ENCODE measurements at regions of chr18 and their contacts with region 1.

Region 1: DNA sequence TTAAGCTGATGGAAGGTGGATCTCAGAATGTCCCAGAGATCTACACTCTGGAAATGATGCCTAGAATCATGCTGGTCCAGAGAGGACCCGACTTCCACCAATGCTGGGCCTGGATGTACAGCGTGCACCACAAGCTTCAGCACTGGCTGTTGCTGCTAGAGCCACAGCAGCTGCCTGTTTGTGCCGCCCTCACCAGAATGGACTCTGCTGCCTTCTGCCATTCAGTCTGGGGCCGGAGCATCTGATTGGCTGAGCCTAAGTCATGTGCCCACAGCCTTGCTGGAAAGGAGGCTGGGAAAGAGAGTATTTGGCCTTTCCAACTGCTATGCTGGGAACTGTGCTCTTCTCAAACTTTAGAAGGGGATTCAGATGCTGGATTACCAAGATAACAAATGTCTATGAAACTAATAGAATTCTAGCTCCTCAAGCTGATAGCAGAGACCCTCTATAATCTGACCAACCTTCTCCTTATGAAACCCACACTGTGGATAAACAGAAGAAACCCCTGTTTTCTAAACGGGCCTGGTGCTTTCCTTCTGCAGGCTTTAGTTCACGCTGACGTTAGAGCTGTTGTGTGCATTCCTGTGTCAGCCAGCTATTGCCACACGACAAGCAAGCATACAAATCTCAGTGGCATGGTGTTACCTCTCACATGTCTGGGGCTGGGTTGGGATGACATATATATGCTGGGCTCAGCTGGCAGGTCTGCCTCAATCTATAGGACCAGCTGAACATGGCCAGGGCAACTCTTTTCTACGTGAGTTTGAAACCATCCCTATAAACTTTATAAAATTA is 4.1 kb upstream of the LOXHD1 start:
- DNase-seq: no peak
- ATAC-seq: peak; percentile 54; the same call in 1 of the 2 replicates
- H3K4me3 ChIP-seq: no peak overlapping the region
- H3K27ac ChIP-seq: no peak overlapping the region
- H3K4me1 ChIP-seq: no peaks in the 10 kb centered on the region
- H3K27me3 ChIP-seq: no peaks in the 10 kb centered on the region
- CTCF ChIP-seq: no peak
- POLR2A ChIP-seq: no peak
- RAD21 ChIP-seq: no peak

Region 2: GRCh38 chr18:46148810-46149209 is 512.3 kb before region 1 on chr18:
- CTCF ChIA-PET with region 1: interaction called, 25 read pairs
- POLR2A ChIA-PET with region 1: no interaction called
- RAD21 ChIA-PET with region 1: interaction called in 1 of 2 experiments, 3 read pairs
- intact Hi-C with region 1: loop called (anchors 1 kb)
- DNase-seq: no peak
- ATAC-seq: peak; percentile 65
- H3K4me3 ChIP-seq: no peak overlapping the region
- H3K27ac ChIP-seq: no peak overlapping the region
- H3K4me1 ChIP-seq: peaks cover 20 to 28% of the 10 kb centered on the region in 2 experiments
- H3K27me3 ChIP-seq: no peaks in the 10 kb centered on the region
- CTCF ChIP-seq: peak; percentile 57 to 85 (median 78)
- POLR2A ChIP-seq: no peak
- RAD21 ChIP-seq: peak; percentile 85

Region 3: GRCh38 chr18:46281185-46282176 is 379.7 kb before region 1 on chr18:
- CTCF ChIA-PET with region 1: interaction called, 76 read pairs
- POLR2A ChIA-PET with region 1: no interaction called
- RAD21 ChIA-PET with region 1: interaction called, 8 to 12 read pairs
- intact Hi-C with region 1: loop called (anchors 1 kb)
- DNase-seq: peak; percentile 43
- ATAC-seq: peak; percentile 95
- H3K4me3 ChIP-seq: no peak overlapping the region
- H3K27ac ChIP-seq: no peak overlapping the region
- H3K4me1 ChIP-seq: no peaks in the 10 kb centered on the region
- H3K27me3 ChIP-seq: no peaks in the 10 kb centered on the region
- CTCF ChIP-seq: peak; percentile 74 to 96 (median 83)
- POLR2A ChIP-seq: no peak
- RAD21 ChIP-seq: peak; percentile 87

Region 4: DNA sequence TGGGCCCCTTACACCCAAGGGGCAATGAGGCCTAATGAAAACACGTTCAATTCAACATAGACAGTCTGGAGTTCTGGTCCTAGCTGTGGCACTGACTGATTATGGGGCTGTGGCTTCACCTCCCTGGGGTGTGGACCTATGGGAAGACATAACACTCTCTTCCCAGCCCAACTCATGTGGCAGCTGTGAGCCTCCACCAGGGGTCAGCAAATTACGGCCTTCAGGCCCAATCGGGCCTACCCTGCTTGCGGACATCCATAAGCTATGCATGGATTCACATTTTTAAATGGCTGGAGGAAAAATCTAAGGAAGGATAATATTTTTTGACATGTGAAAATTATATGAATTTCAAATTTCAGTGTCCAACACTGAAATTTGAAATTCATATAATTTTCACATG is 105.4 kb before region 1 on chr18:
- CTCF ChIA-PET with region 1: interaction called, 45 read pairs
- POLR2A ChIA-PET with region 1: no interaction called
- RAD21 ChIA-PET with region 1: interaction called, 5 to 7 read pairs
- intact Hi-C with region 1: loop called (anchors 1 kb)
- DNase-seq: peak; percentile 32
- ATAC-seq: peak; percentile 100
- H3K4me3 ChIP-seq: no peak overlapping the region
- H3K27ac ChIP-seq: no peak overlapping the region
- H3K4me1 ChIP-seq: no peaks in the 10 kb centered on the region
- H3K27me3 ChIP-seq: no peaks in the 10 kb centered on the region; the same call in 1 of the 2 replicates
- CTCF ChIP-seq: peak; percentile 54 to 85 (median 80); a peak in 5 of 6 replicates
- POLR2A ChIP-seq: no peak
- RAD21 ChIP-seq: peak; percentile 67

Region 5: DNA sequence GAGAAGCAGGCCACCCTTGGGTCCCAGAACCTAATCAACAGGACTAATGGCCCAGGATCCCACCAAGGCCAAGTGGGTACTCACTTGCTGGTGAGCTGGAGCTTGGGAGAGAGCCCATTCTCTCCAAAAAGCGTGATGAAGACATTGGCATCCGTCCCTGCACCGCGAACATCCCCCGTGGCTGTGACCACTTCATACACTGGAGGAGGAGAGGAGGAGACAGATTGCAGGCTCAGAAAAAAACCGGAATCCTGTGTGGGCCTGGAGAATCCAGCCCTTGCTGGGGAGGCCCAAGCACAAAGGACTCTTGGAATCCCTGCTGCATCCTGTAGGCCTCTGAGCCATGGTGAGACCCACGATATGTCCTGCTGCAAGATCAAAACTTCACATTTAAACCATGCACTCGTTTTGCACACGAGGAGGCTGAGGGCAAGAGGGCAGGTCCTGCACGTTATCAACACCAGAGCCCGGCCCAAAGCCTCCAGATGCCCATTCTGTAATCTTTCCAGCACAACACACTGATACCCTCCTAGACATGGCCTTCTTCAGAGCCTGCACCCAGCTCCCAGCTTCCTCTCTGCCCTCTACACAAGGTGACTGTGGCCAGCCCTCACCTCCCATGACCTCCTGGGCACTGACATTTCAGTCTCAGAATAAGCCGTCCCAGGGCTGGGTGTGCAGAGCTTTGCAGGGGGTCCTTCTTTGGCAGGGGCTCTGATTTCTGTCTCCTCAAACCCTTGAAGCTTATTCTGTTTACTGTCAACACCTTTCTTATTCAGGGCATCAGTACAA is 11.9 kb before region 1 on chr18:
- CTCF ChIA-PET with region 1: interaction called, 12 read pairs
- POLR2A ChIA-PET with region 1: no interaction called
- RAD21 ChIA-PET with region 1: no interaction called
- intact Hi-C with region 1: no loop called
- DNase-seq: no peak
- ATAC-seq: no peak
- H3K4me3 ChIP-seq: no peak overlapping the region
- H3K27ac ChIP-seq: no peak overlapping the region
- H3K4me1 ChIP-seq: no peaks in the 10 kb centered on the region
- H3K27me3 ChIP-seq: peaks cover 16% of the 10 kb centered on the region
- CTCF ChIP-seq: no peak
- POLR2A ChIP-seq: no peak
- RAD21 ChIP-seq: no peak

Measured in HCT116 (cell line).